Heart left ventricle (tissue), 16 donors: ENCODE measurements at regions of chr10 and their contacts with region 1.

Region 1: DNA sequence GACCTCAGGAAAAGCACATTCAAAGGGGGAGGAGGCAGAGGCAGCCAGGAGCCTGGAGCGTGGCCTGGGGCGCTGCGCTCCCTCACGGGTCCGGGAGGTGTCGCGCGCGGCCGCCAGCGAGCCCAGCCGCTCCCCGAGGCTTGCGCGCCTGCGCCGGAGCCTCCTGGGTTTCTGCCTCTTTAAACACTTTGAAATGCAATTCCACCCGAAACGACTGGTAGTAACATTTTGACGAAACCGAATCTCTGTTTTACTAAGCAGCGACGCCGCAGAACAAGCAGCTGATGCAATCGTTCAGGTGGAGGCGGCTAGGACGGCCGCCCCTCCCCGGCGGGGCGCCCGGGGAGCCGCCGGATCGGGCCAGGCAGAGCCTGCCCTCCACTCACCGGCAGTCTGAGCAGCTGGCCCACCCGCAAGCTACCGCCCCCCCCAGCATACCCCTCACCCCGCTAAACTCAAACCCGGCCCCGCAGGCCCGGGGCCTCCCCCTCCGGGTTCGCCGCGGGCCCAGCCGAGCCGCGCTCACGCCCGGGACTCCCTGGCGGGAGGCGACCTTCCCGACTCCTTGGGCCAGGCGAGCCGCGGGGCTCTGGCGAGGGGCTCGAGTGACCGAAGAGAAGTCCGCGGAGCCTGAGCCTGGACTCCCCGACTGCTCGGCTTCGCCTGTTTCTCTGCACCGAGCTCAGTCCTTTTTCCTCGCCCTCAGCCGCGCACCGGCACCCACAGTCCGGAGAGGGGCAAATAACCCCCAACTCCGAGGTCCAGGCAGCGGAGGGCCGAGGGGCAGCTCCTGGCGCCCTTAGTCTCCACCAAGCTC is 3.2 kb downstream of the MKX start:
- DNase-seq: peak; percentile 59 to 86 (median 71)
- ATAC-seq: peak; percentile 66 to 96 (median 90)
- H3K4me3 ChIP-seq: peak overlapping the region; percentile 46 to 77 (median 66)
- H3K27ac ChIP-seq: peak overlapping the region in 8 of 12 donors; percentile 27 to 95 (median 47)
- H3K4me1 ChIP-seq: peaks cover 0 to 59% (median 38%) of the 10 kb centered on the region in 12 donors
- H3K27me3 ChIP-seq: peaks cover 28 to 84% (median 59%) of the 10 kb centered on the region in 9 donors
- CTCF ChIP-seq: peak; percentile 52 to 90 (median 75)
- POLR2A ChIP-seq: no peak

Region 2: DNA sequence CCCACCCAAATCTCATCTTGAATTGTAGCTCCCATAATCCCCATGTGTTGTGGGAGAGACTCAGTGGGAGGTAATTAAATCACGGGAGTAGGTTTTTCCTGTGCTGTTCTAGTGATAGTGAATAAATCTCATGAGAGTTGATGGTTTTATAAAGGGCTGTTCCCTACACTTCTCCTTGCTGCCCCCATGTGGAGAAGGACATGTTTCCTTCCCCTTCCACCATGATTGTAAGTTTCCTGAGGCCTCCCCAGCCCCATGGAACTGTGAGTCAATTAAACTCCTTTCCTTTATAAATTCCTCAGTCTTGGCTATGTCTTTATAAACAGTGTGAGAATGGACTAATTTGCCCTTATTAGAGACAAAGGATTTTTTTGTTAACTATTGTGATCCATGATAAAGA is 51.8 kb after region 1 on chr10:
- intact Hi-C with region 1: no loop called
- DNase-seq: no peak
- ATAC-seq: no peak
- H3K4me3 ChIP-seq: no peak overlapping the region
- H3K27ac ChIP-seq: no peak overlapping the region
- H3K4me1 ChIP-seq: no peaks in the 10 kb centered on the region
- H3K27me3 ChIP-seq: peaks cover 0 to 6% (median 0%) of the 10 kb centered on the region in 9 donors
- CTCF ChIP-seq: peak in 1 of 12 donors; percentile 8
- POLR2A ChIP-seq: no peak

Region 3: DNA sequence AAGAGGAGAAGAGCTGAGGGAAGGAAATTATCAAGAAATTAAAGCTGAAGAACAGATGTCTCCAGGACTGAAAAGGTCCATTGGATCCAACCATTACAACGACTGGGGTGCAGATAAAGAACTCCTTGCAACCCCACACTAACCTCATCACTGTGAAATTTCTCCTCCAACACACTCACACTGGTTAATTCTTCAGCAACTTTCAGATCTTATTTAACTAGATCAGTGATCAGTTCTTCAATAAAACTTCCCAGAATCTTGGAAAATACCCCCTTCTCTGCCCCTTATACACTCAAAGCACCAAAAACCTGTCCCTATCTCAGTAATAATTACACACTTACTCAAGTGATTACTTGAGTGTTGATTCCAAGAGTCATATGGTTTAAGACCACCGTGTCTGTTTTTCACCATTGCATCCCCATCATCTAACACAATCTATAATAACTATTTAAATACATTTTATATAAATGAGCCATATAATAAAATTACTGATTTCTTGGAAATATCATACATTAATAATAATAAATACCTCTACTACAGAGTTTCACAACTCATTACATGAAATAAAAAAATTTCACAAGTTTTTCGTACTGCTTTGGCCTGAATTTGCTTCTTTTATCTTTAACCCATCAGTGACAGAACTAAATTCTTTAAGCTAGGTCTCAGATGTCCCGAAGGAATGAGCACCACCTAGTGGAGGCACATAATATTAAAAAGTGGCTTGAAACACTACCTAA is 436.8 kb after region 1 on chr10:
- intact Hi-C with region 1: loop called (anchors 2 to 10 kb)
- DNase-seq: peak in 1 of 5 donors; percentile 9
- ATAC-seq: peak in 3 of 4 donors; percentile 46 to 65 (median 57)
- H3K4me3 ChIP-seq: peak overlapping the region in 3 of 12 donors; percentile 25 to 45 (median 28)
- H3K27ac ChIP-seq: peak overlapping the region in 1 of 12 donors; percentile 66
- H3K4me1 ChIP-seq: peaks cover 0 to 16% (median 7%) of the 10 kb centered on the region in 12 donors
- H3K27me3 ChIP-seq: no peaks in the 10 kb centered on the region
- CTCF ChIP-seq: peak; percentile 60 to 82 (median 71)
- POLR2A ChIP-seq: no peak